Right cardiac atrium (tissue), 5 donors: ENCODE measurements at regions of chr11 and their contacts with region 1.

Region 1: GRCh38 chr11:25981998-25982397 is 349.9 kb upstream of the ANO3 start:
- DNase-seq: no peak
- ATAC-seq: peak; percentile 78 to 86
- H3K4me3 ChIP-seq: no peak overlapping the region
- H3K27ac ChIP-seq: no peak overlapping the region
- H3K4me1 ChIP-seq: no peaks in the 10 kb centered on the region
- H3K27me3 ChIP-seq: no peaks in the 10 kb centered on the region

Region 2: GRCh38 chr11:25838918-25839611 is 142.9 kb before region 1 on chr11:
- intact Hi-C with region 1: no loop called
- DNase-seq: no peak
- ATAC-seq: no peak
- H3K4me3 ChIP-seq: no peak overlapping the region
- H3K27ac ChIP-seq: no peak overlapping the region
- H3K4me1 ChIP-seq: no peaks in the 10 kb centered on the region
- H3K27me3 ChIP-seq: no peaks in the 10 kb centered on the region

Region 3: GRCh38 chr11:26043665-26044064 is 61.7 kb after region 1 on chr11:
- intact Hi-C with region 1: no loop called
- DNase-seq: no peak
- ATAC-seq: no peak
- H3K4me3 ChIP-seq: no peak overlapping the region
- H3K27ac ChIP-seq: no peak overlapping the region
- H3K4me1 ChIP-seq: no peaks in the 10 kb centered on the region
- H3K27me3 ChIP-seq: no peaks in the 10 kb centered on the region

Region 4: DNA sequence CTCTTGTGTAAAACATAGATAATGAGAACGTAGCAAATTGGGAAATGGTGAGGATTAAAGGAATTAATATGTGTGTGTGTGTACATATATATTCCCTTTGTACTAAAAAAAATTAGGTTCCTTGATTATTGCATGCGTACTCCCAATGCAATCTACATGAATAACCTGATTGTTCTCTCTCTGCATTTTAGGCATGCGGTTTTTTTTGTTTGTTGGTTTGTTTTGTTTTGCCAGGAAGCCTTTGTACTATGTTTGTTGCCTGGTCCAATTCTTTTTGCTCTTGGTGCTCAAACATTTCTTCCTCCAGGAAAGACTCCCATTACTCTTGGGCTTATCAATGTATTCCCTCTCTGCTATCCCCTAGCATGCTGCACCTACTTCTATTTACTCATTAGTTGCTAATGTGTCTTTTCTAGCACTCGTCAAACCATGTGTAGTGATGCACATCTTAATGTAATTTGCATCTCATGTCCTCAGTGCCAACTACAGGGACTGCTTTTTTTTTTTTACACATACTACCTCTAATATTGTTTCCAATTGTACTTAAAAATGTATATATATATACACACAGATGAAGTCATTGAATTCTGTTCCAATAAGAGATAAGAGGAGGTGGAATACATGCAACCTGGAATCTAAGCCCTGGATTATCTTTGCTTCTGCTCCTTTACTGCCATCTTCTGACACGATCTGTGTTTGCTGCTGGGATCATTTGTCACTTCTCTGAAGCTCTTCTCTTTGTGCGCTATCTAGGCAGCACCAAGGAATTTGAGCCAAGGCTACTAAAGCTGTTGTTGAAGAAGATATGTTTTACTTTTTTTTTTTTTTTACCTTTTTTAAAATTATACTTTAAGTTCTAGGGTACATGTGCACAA is 152.7 kb after region 1 on chr11:
- intact Hi-C with region 1: loop called (anchors 5 kb)
- DNase-seq: no peak
- ATAC-seq: no peak
- H3K4me3 ChIP-seq: no peak overlapping the region
- H3K27ac ChIP-seq: no peak overlapping the region
- H3K4me1 ChIP-seq: no peaks in the 10 kb centered on the region
- H3K27me3 ChIP-seq: no peaks in the 10 kb centered on the region

Region 5: GRCh38 chr11:26227296-26227695 is 245.3 kb after region 1 on chr11:
- intact Hi-C with region 1: loop called in 1 of 4 experiments (anchors 5 kb)
- DNase-seq: no peak
- ATAC-seq: peak; percentile 56 to 68
- H3K4me3 ChIP-seq: no peak overlapping the region
- H3K27ac ChIP-seq: no peak overlapping the region
- H3K4me1 ChIP-seq: no peaks in the 10 kb centered on the region
- H3K27me3 ChIP-seq: no peaks in the 10 kb centered on the region

Region 6: DNA sequence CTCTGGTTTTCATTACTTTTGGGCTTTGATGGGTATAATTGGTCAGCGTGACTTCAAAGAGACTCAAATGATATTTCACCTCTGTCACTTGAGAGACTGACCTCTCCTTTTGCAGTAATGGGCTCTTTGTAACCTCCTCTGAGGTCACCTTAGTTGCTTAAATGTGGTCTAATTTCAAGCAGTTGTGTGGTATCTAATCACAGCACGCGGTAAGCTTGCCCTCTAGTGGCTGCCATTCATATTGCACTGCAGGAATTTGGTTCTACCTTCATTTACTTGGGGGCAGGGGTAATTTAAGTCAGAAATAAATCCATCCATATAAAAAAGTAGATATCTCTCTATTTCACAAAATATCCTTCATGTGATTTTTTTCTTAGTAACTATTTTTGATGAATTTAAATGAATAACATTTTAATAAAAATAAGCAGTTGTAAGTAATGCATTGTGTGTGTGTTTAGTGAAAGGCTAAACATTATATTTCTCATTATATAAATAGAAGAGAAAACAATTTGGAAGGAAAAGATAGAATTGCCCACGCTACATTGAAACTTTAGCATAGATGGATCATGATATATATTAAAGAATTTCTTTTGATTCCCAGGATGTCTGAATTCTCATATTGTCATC is 294.9 kb after region 1 on chr11:
- intact Hi-C with region 1: loop called in 2 of 4 experiments (anchors 5 kb)
- DNase-seq: peak in 2 of 3 donors; percentile 32 to 53
- ATAC-seq: peak; percentile 55 to 60
- H3K4me3 ChIP-seq: no peak overlapping the region
- H3K27ac ChIP-seq: no peak overlapping the region
- H3K4me1 ChIP-seq: no peaks in the 10 kb centered on the region
- H3K27me3 ChIP-seq: no peaks in the 10 kb centered on the region